ENCODE measurements at regions of chr22 and their contacts with region 1.

Region 1: GRCh38 chr22:20568989-20569769 is 61.8 kb downstream of the MED15 start:
- DNase-seq: peak; percentile 89
- ATAC-seq: peak; percentile 67
- H3K4me3 Mint-ChIP-seq: no peak overlapping the region
- H3K27ac Mint-ChIP-seq: peak overlapping the region; percentile 39
- H3K4me1 Mint-ChIP-seq: peaks cover 74% of the 10 kb centered on the region
- H3K27me3 Mint-ChIP-seq: no peaks in the 10 kb centered on the region
- CTCF ChIP-seq: no peak

Region 2: GRCh38 chr22:20507253-20508066 is 61.7 kb before region 1 on chr22 and contains the start of gene MED15:
- CTCF ChIA-PET with region 1: interaction called, 25 read pairs
- POLR2A ChIA-PET with region 1: interaction called, 18 read pairs
- intact Hi-C with region 1: no loop called
- DNase-seq: peak; percentile 95
- ATAC-seq: peak; percentile 87
- H3K4me3 Mint-ChIP-seq: peak within 1 kb of the TSS; percentile 99
- H3K27ac Mint-ChIP-seq: peak within 1 kb of the TSS; percentile 100
- H3K4me1 Mint-ChIP-seq: peaks cover 48% of the 10 kb centered on the region
- H3K27me3 Mint-ChIP-seq: no peaks in the 10 kb centered on the region
- CTCF ChIP-seq: no peak
- total RNA-seq, gene MED15: 110 to 118 TPM

Region 3: DNA sequence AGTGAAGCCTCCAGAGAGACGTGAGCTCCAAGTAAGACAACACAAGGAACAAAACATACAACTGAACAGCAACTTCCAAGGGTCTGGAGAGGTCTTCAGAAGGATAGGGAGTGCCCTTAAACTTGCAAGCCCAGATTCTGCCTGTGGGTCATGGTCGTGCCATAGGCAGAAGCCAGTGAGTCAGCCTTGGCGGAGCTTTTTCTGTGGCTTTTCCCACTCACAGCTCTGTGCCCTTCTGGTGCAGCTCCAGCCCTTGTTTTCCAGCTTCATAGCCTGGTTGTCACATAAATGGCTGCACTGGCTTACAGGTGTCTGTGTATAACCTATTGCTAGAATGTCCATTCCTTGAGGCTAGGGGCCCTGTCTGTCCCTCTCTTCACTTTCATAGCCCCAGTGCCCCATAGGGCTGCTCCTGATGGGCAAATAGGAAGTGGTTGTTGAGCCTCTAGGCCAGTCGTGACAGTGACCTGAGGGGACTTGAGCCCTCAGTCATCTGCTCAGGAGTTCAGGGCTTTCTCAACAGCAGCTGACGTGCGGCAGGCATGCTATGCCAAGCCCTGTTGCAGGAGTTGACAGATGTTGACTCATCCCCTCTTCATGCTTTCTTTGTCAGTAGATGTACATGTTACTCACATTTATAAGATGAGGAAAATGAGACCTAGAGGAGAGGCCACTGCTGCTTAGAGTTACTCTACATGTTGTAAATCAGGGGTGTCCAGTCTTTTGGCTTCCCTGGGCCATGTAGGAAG is 54.3 kb before region 1 on chr22:
- CTCF ChIA-PET with region 1: interaction called, 25 read pairs
- POLR2A ChIA-PET with region 1: interaction called, 9 read pairs
- intact Hi-C with region 1: no loop called
- DNase-seq: no peak
- ATAC-seq: peak; percentile 35
- H3K4me3 Mint-ChIP-seq: no peak overlapping the region
- H3K27ac Mint-ChIP-seq: peak overlapping the region; percentile 19
- H3K4me1 Mint-ChIP-seq: peaks cover 80% of the 10 kb centered on the region
- H3K27me3 Mint-ChIP-seq: no peaks in the 10 kb centered on the region
- CTCF ChIP-seq: no peak

Region 4: GRCh38 chr22:20531315-20532201 is 37.6 kb before region 1 on chr22:
- CTCF ChIA-PET with region 1: interaction called, 17 read pairs
- POLR2A ChIA-PET with region 1: interaction called, 3 read pairs
- intact Hi-C with region 1: no loop called
- DNase-seq: no peak
- ATAC-seq: peak; percentile 25
- H3K4me3 Mint-ChIP-seq: no peak overlapping the region
- H3K27ac Mint-ChIP-seq: peak overlapping the region; percentile 63
- H3K4me1 Mint-ChIP-seq: peaks cover 73% of the 10 kb centered on the region
- H3K27me3 Mint-ChIP-seq: no peaks in the 10 kb centered on the region
- CTCF ChIP-seq: no peak

Region 5: GRCh38 chr22:20542736-20543135 is 26.4 kb before region 1 on chr22:
- CTCF ChIA-PET with region 1: interaction called, 234 read pairs
- POLR2A ChIA-PET with region 1: interaction called, 48 read pairs
- intact Hi-C with region 1: no loop called
- DNase-seq: no peak
- ATAC-seq: no peak
- H3K4me3 Mint-ChIP-seq: no peak overlapping the region
- H3K27ac Mint-ChIP-seq: peak overlapping the region; percentile 25
- H3K4me1 Mint-ChIP-seq: peaks cover 35% of the 10 kb centered on the region
- H3K27me3 Mint-ChIP-seq: no peaks in the 10 kb centered on the region
- CTCF ChIP-seq: no peak

Region 6: DNA sequence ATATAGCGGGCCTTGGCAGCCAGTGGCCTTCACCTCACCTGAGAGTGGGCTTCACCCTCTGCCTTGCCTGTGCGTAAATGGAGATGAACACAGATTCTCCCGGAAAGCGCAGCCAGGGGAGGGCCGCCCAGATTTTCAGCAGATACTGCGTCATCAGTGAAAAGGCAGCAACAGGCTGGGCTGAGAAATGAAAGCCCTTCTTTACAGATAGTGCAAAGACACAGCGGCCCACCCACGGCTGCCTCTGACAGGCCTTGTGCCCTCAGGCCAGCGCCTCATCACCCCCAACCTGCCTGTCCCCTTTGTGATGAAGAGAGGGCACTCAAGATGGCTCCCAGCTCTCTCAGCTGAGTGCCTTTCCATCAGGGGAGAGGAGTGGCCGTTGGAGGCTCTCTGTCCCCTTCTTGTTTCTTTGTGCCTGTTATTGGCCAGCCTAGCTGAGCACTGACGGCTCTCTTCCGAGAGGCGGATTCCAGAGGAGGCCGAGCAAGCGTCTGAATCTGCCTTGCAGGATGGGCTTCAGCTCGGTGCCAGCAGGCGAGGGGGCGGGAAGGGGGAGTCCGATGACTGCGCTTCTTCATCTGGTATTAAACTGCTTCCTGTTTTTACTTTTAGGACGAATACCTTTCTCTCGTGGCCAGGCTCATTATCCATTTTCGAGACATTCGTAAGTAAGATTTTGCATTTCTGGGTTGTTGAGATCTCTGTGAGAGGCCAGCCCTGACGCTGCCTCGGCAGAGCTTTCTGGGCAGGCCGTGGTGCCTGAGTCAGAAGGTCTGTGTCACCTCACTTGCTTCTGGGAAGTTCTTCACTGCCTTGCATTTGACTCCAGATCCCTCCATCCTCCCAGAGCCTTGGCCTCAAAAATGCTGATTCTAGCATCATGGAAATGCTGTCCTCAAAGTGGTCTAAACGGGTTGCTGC is 18.1 kb before region 1 on chr22:
- CTCF ChIA-PET with region 1: interaction called, 234 read pairs
- POLR2A ChIA-PET with region 1: interaction called, 48 read pairs
- intact Hi-C with region 1: no loop called
- DNase-seq: peak; percentile 88
- ATAC-seq: peak; percentile 70
- H3K4me3 Mint-ChIP-seq: peak overlapping the region; percentile 65
- H3K27ac Mint-ChIP-seq: peak overlapping the region; percentile 97
- H3K4me1 Mint-ChIP-seq: peaks cover 84% of the 10 kb centered on the region
- H3K27me3 Mint-ChIP-seq: no peaks in the 10 kb centered on the region
- CTCF ChIP-seq: no peak

Region 7: GRCh38 chr22:20595461-20595860 is 26.3 kb after region 1 on chr22:
- CTCF ChIA-PET with region 1: interaction called, 10 read pairs
- POLR2A ChIA-PET with region 1: no interaction called
- intact Hi-C with region 1: no loop called
- DNase-seq: no peak
- ATAC-seq: no peak
- H3K4me3 Mint-ChIP-seq: no peak overlapping the region
- H3K27ac Mint-ChIP-seq: no peak overlapping the region
- H3K4me1 Mint-ChIP-seq: peaks cover 2% of the 10 kb centered on the region
- H3K27me3 Mint-ChIP-seq: no peaks in the 10 kb centered on the region
- CTCF ChIP-seq: no peak

Region 8: DNA sequence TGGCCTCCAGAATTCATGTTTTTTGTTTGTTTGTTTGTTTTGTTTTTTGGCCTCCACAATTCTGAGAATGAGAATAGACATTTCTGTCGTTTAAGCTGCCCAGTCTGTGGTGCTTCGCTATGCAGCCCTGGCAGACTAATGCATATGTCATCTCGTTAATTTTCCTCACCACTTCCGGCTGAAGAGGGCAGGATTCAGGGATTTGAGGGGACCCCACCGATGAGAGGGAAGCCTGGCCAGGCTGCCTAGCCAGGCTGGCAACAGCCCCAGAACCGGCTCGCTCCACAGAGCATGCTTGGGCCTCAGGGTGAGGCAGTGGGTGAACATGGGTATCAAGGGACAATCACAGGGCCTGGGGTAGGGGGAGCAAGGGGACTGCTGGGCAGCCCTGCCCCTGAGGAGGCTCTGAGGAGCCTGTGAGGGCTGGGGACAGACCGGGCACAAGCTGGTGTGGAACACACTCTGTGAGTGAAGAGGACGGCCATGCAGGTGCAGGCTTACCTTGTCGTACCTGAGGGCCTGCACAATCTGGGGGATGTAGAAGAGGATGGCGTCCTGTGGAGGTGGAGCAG is 156.9 kb after region 1 on chr22:
- CTCF ChIA-PET with region 1: no interaction called
- POLR2A ChIA-PET with region 1: no interaction called
- intact Hi-C with region 1: no loop called
- DNase-seq: no peak
- ATAC-seq: no peak
- H3K4me3 Mint-ChIP-seq: no peak overlapping the region
- H3K27ac Mint-ChIP-seq: no peak overlapping the region
- H3K4me1 Mint-ChIP-seq: no peaks in the 10 kb centered on the region
- H3K27me3 Mint-ChIP-seq: no peaks in the 10 kb centered on the region
- CTCF ChIP-seq: no peak